Activated T-helper 2 cell treated with anti-CD3 and anti-CD28 coated beads, Interferon-gamma antibody, Interleukin-2, Interleukin-4, amounts not matched to agents 10 μg/mL and 5 μg/mL and 100 μg/mL, durations not matched to agents 14 hours and 24 hours and 36 hours (primary cell): ENCODE measurements at regions of chr6 and their contacts with region 1.

Region 1: GRCh38 chr6:89834884-89835792 is 5.5 kb downstream of the CASP8AP2 start:
- DNase-seq: peak; percentile 41
- H3K4me3 Mint-ChIP-seq: peak overlapping the region; percentile 60
- H3K27ac Mint-ChIP-seq: peak overlapping the region; percentile 88
- H3K4me1 Mint-ChIP-seq: peaks cover 46% of the 10 kb centered on the region
- H3K27me3 Mint-ChIP-seq: no peaks in the 10 kb centered on the region

Region 2: DNA sequence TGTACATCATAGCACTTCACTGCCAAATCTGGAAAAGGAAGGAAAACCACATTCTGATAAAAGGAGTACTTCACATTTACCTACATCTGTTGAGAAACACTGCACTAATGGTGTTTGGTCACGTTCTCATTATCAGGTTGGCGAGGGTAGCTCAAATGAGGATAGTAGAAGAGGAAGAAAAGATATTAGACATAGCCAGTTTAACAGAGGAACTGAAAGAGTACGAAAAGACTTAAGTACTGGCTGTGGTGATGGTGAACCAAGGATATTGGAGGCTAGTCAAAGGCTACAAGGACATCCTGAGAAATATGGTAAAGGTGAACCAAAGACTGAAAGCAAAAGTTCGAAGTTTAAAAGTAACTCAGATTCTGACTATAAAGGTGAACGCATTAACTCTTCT is 27.1 kb after region 1 on chr6:
- intact Hi-C with region 1: loop called (anchors 2 kb)
- DNase-seq: no peak
- H3K4me3 Mint-ChIP-seq: peak overlapping the region; percentile 1
- H3K27ac Mint-ChIP-seq: peak overlapping the region; percentile 73
- H3K4me1 Mint-ChIP-seq: peaks cover 31% of the 10 kb centered on the region
- H3K27me3 Mint-ChIP-seq: no peaks in the 10 kb centered on the region